Activated CD4-positive, alpha-beta T cell treated with anti-CD3 and anti-CD28 coated beads for 36 hours (primary cell): ENCODE measurements at regions of chr19 and their contacts with region 1.

Region 1: DNA sequence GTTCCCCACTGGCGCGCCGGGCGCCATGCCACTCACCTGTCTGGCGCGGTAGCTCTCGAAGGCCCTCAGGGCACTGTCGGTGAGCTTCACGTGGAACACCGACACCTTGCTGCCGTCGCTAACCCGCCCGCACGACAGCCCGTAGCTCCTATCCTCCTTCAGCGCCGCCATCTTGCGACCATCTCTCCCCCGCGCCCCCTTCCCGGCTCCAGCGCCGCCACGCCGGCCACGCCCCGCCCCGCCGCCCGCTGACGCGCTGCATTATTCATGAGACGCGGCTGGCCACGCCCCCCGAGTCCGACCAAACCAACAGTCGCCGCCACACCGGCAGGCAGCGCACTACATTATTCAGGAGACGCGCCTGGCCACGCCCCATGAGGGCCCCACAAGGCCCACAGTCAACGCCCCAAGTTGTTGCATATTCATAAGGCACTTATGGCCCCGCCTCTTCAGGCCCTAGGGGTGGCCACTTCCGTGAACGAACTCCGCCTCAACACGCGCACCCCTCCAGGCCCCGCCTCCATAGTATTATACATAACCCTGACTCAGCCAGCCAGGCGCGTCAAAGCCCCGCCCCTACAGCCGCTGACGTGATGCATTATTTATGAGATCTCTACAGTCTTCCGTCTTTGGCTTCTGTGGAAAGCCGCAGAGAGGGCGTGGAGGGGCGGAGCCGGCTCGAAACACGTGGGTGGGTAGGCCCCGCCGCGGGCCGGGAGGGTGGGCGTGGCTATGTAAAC is at the start of gene ELL:
- DNase-seq: peak; percentile 100
- ATAC-seq: peak; percentile 92
- H3K4me3 Mint-ChIP-seq: peak within 1 kb of the TSS; percentile 80
- H3K27ac Mint-ChIP-seq: peak within 1 kb of the TSS; percentile 93
- H3K4me1 Mint-ChIP-seq: peaks cover 14% of the 10 kb centered on the region
- H3K27me3 Mint-ChIP-seq: no peaks in the 10 kb centered on the region
- total RNA-seq, gene ELL: 20.2 to 21.4 TPM

Region 2: DNA sequence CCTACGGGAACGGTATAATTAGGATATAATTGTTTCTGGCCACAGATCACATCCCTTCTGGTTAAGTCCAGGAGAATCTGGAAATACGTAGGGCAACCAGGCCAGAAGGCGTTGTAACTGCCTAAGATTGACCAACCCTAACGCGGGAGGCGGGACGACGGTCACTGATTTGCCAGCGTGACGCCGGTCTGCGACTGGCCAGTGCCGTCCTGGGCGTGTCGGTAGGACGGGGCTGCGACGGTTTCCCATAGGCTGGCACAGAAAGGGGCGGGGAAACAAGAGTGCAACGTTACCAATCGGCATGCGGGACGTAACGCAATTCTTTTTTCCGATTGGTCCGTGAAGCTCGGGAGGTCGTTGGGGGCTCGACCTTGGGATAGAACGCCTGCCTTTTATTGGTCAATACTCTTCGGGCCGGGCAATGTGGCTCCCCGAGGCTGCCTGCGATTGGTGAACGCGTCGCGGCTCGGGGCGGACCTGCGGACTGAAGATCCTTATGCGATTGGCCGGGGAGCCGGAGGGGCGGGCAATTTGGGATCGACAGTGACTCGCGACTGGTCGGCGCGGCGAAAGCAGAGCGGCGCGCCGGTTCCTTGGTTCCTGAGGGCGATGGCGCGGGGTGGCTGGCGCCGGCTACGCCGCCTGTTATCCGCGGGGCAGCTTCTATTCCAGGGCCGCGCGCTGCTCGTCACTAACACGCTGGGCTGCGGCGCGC is 329.2 kb before region 1 on chr19 and contains the start of gene MPV17L2:
- CTCF ChIA-PET with region 1: no interaction called
- POLR2A ChIA-PET with region 1: no interaction called
- intact Hi-C with region 1: loop called in 1 of 2 experiments (anchors 1 kb)
- DNase-seq: peak; percentile 99
- ATAC-seq: peak; percentile 95
- H3K4me3 Mint-ChIP-seq: peak within 1 kb of the TSS; percentile 79
- H3K27ac Mint-ChIP-seq: peak within 1 kb of the TSS; percentile 91
- H3K4me1 Mint-ChIP-seq: peaks cover 22% of the 10 kb centered on the region
- H3K27me3 Mint-ChIP-seq: no peaks in the 10 kb centered on the region
- total RNA-seq, gene MPV17L2: 5.7 to 6.2 TPM

Region 3: DNA sequence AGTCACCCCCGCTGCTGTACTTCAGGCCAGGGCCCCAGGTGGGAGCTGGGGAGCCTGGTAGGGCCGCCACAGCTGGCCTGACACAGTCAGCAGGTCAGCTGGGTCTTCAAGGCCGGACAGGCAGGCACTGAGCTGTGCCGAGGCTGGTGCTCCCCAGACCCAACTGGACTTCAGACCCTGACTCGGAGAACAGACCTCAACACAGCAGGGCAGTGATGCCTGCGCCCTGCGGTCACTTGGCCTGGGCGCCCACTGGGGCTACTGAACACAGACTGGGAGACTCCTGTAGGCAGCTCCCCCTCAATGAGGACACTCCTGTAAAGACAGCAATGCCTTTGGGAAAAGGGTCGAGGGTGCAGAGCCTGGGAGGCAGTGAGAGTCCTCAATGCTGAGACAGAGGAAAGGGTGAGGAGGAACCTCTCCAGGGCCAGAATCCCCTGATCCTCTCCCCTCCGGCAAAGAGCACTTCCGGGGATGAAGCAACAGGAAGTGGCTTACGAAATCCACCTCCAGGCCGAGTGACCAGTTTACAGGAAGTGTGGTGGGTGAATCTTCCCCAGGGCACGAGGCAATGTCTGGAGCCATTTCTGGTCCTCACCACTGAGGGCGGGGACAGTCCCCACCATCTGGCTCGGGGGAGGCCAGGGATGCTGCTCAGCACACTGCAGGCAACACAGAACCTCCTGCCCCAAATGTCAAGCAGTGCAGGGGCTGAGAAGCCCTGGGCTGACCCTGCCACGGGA is 43.3 kb before region 1 on chr19:
- CTCF ChIA-PET with region 1: interaction called, 15 read pairs
- POLR2A ChIA-PET with region 1: no interaction called
- intact Hi-C with region 1: loop called in 1 of 2 experiments (anchors 2 kb)
- DNase-seq: peak; percentile 89
- ATAC-seq: peak; percentile 92
- H3K4me3 Mint-ChIP-seq: peak overlapping the region; percentile 59
- H3K27ac Mint-ChIP-seq: peak overlapping the region; percentile 95
- H3K4me1 Mint-ChIP-seq: peaks cover 80% of the 10 kb centered on the region
- H3K27me3 Mint-ChIP-seq: no peaks in the 10 kb centered on the region

Region 4: DNA sequence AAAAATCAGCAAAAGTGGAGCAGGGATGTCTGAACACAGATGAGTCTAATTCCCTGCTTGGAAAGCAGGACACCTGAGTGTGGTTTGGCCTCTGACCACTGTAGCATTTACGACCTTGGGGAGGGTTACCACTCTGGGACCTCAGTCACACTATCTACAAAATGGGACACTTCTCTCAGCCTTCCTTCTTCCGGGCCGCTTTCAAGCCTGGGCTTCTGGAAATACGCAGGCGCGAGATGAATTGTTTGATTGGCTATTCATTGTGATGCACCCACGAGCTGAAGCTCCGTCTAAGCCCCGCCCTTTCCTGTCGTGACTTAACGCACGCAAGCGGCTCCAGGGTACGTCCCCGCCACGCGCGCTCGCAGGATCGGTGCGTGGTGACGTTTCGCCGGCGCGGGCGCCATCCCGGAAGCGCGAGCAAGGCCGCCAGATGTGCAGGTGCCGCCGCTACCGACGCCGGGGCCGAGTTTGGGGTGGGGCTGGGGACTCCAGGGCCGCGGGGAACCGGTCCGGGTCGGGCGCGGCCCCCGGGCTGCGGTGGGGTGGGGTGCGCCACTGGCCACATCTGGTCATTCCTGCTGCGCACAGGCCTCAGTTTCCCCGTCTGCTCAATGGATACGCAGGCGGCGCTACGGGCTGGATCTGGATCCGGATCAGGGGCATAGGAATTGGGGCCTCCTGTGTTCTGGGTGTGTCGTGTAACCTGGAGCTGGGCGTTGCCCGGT is 35.6 kb after region 1 on chr19 and contains the start of gene KXD1:
- CTCF ChIA-PET with region 1: interaction called, 7 read pairs
- POLR2A ChIA-PET with region 1: interaction called, 15 read pairs
- intact Hi-C with region 1: loop called (anchors 1 kb)
- DNase-seq: peak; percentile 99
- ATAC-seq: peak; percentile 99
- H3K4me3 Mint-ChIP-seq: peak within 1 kb of the TSS; percentile 91
- H3K27ac Mint-ChIP-seq: peak within 1 kb of the TSS; percentile 95
- H3K4me1 Mint-ChIP-seq: peaks cover 20% of the 10 kb centered on the region
- H3K27me3 Mint-ChIP-seq: no peaks in the 10 kb centered on the region
- total RNA-seq, gene KXD1: 121 to 170 TPM

Region 5: GRCh38 chr19:18612772-18613588 is 90.9 kb after region 1 on chr19 and contains the start of gene TMEM59L:
- CTCF ChIA-PET with region 1: no interaction called
- POLR2A ChIA-PET with region 1: no interaction called
- intact Hi-C with region 1: no loop called
- DNase-seq: peak; percentile 70
- ATAC-seq: peak; percentile 53
- H3K4me3 Mint-ChIP-seq: peak within 1 kb of the TSS; percentile 57
- H3K27ac Mint-ChIP-seq: no peak within 1 kb of the TSS
- H3K4me1 Mint-ChIP-seq: peaks cover 16% of the 10 kb centered on the region
- H3K27me3 Mint-ChIP-seq: peaks cover 64% of the 10 kb centered on the region
- total RNA-seq, gene TMEM59L: 0.11 TPM in 1 of 2 experiments, not detected in the other

Region 6: DNA sequence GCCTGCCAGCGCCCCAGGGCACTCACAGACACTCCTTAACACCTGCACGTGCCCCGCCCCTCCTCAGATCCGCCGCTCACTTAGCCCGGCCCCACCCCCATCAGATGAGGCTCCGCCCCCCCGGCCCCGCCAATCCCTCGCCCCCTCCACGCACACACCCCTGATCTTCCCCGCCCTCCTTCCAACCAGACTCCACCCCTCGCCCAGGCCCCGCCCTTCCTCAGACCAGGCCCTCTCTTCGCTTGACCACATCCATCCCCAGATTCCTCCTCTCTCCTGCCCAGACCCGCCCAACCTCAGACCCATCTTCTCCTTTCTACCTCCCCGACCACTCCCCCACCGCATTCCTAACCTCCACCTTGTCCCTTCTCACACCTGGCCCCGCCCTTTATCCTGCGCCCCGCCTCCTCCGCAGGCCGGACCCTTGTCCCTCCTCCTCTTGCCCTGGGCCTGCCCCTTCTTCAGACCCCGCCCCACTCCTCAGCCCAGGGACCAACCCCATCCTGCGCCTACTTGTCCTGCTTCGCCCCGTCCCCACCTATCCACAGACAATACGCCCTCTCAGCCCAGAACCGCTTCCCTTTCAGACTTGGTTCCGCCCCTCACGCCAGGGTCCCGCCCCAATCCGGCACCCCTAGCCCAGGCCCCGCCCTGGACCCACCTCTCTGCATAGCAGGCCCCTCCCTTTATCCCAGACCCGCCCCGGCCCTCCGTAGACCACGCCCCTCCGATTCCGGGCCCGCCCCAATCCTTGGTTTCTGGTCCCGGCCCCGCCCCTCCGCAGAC is 114.3 kb after region 1 on chr19:
- CTCF ChIA-PET with region 1: interaction called, 3 read pairs
- POLR2A ChIA-PET with region 1: no interaction called
- intact Hi-C with region 1: loop called (anchors 1 kb)
- DNase-seq: peak; percentile 100
- ATAC-seq: peak; percentile 92
- H3K4me3 Mint-ChIP-seq: peak overlapping the region; percentile 84
- H3K27ac Mint-ChIP-seq: peak overlapping the region; percentile 78
- H3K4me1 Mint-ChIP-seq: peaks cover 24% of the 10 kb centered on the region
- H3K27me3 Mint-ChIP-seq: no peaks in the 10 kb centered on the region

Region 7: DNA sequence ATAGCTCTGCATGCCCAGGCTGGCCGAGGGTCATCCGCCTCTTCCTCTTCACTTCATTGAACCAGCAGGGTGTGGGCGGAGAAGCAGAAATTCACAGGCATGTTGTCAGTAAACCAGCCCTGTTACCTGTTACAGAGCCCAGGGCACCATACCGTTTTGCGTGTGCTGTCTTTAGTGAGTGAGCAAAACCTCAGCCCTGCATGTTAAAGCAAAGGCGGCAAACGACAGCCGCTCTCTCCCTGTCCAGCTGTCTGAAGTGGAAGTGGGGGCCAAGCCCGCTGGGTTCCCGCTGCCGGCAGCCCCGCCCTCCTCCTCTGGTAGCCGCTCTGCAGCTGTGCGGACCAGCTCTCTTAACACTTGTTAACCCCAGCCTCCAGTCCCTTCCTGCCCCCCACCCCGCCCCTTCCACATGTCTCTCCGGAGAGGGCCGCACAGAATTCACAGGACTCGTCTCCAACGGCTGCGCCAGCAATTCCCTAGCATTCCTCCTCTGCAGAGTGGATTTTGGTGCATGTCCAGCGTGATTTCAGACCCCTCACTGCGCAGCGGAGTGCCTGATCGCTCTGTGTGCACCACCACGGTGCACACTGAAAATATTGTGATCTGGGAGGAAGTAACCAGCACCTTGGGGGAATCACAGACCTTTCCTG is 127.4 kb after region 1 on chr19:
- CTCF ChIA-PET with region 1: no interaction called
- POLR2A ChIA-PET with region 1: no interaction called
- intact Hi-C with region 1: no loop called
- DNase-seq: no peak
- ATAC-seq: no peak
- H3K4me3 Mint-ChIP-seq: no peak overlapping the region
- H3K27ac Mint-ChIP-seq: no peak overlapping the region
- H3K4me1 Mint-ChIP-seq: peaks cover 12% of the 10 kb centered on the region
- H3K27me3 Mint-ChIP-seq: no peaks in the 10 kb centered on the region

Region 8: DNA sequence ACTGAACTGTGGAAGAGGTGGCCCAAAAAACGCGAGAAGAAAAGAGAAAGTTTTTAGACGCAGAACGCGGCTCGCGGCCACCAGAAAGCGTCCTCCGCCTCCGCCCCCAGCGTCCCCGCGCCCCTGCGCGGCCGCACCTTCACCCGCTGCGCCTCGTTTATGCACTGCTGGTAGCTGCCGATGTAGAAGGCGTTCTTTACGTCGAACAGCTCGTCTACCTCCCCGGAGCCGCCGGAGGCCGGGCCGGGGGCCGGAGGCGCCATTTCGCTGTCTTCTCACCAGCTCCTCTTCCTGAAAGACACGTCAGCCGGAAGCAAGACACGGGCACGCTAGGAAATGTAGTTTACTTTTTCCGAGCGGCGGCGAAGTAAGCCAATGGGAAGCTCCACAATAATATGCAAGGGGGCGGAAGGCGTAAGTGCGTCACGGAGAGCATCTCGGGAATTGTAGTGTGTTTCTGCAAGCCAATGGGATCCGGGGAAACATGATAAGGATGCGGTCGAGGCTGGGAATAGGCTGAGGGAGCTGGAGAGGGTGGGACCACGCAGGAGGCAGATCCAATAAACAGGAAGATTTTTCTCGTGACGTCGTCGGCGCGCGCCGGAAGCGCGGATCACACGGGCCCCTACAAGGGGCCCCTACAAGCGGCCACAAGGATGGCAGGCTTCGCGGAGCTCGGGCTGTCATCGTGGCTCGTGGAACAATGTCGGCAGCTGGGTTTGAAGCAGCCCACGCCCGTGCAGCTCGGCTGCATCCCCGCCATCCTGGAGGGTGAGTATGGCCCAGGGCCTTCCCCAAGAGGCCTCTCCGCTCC is 397.2 kb after region 1 on chr19 and contains the starts of genes COPE and DDX49:
- CTCF ChIA-PET with region 1: no interaction called
- POLR2A ChIA-PET with region 1: no interaction called
- intact Hi-C with region 1: loop called (anchors 1 kb)
- DNase-seq: peak; percentile 98
- ATAC-seq: peak; percentile 98
- H3K4me3 Mint-ChIP-seq: peak within 1 kb of the TSS; percentile 99
- H3K27ac Mint-ChIP-seq: peak within 1 kb of the TSS; percentile 96
- H3K4me1 Mint-ChIP-seq: peaks cover 41% of the 10 kb centered on the region
- H3K27me3 Mint-ChIP-seq: no peaks in the 10 kb centered on the region
- total RNA-seq, gene COPE: 158 to 182 TPM
- total RNA-seq, gene DDX49: 51.4 to 53.4 TPM

Region 9: GRCh38 chr19:19192078-19192882 is 670.2 kb after region 1 on chr19 and contains the starts of genes BORCS8 and RFXANK:
- CTCF ChIA-PET with region 1: no interaction called
- POLR2A ChIA-PET with region 1: no interaction called
- intact Hi-C with region 1: loop called in 1 of 2 experiments (anchors 1 kb)
- DNase-seq: peak; percentile 99
- ATAC-seq: peak; percentile 92
- H3K4me3 Mint-ChIP-seq: peak within 1 kb of the TSS; percentile 91
- H3K27ac Mint-ChIP-seq: peak within 1 kb of the TSS; percentile 94
- H3K4me1 Mint-ChIP-seq: peaks cover 41% of the 10 kb centered on the region
- H3K27me3 Mint-ChIP-seq: no peaks in the 10 kb centered on the region
- total RNA-seq, gene BORCS8: 19.5 to 25.3 TPM
- total RNA-seq, gene RFXANK: 56.2 to 68.5 TPM